ENCODE measurements at regions of chr12 and their contacts with region 1.

Region 1: DNA sequence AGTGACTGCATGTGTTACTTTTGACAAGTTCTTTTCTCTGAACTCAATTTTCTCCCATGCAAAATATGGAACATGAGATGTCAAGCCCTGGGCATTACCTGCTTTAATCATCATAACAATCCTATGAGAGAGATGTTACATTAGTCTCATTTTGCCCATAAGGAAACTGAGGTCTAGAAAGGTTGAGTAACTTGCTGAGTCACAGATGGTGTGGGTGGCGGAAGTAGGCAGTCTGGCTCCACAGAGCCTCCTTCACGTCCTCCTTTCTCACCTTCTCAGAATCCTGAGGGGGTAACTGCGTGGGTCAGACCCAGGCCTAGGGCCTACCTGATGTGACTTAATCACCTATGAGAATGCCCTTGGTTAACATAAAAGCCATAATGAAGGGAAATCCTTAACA is 50.7 kb downstream of the TMTC1 start:
- DNase-seq: no peak
- H3K4me3 ChIP-seq: no peak overlapping the region
- H3K27ac ChIP-seq: no peak overlapping the region
- H3K4me1 ChIP-seq: peaks cover 20% of the 10 kb centered on the region
- H3K27me3 ChIP-seq: no peaks in the 10 kb centered on the region
- CTCF ChIP-seq: no peak
- POLR2A ChIP-seq: no peak

Region 2: GRCh38 chr12:29782285-29782870 is 49.3 kb after region 1 on chr12:
- intact Hi-C with region 1: loop called (anchors 10 kb)
- DNase-seq: no peak
- H3K4me3 ChIP-seq: peak overlapping the region; percentile 65 to 83
- H3K27ac ChIP-seq: peak overlapping the region; percentile 86
- H3K4me1 ChIP-seq: peaks cover 16% of the 10 kb centered on the region
- H3K27me3 ChIP-seq: no peaks in the 10 kb centered on the region
- CTCF ChIP-seq: no peak
- POLR2A ChIP-seq: no peak

Region 3: GRCh38 chr12:31482816-31483215 is 1749.8 kb after region 1 on chr12:
- intact Hi-C with region 1: no loop called
- DNase-seq: no peak
- H3K4me3 ChIP-seq: no peak overlapping the region
- H3K27ac ChIP-seq: no peak overlapping the region
- H3K4me1 ChIP-seq: no peaks in the 10 kb centered on the region
- H3K27me3 ChIP-seq: no peaks in the 10 kb centered on the region
- CTCF ChIP-seq: no peak
- POLR2A ChIP-seq: no peak